PC-9 (cell line): ENCODE measurements at regions of chr18 and their contacts with region 1.

Region 1: GRCh38 chr18:903701-904100 is 970 bp upstream of the ADCYAP1 start:
- DNase-seq: peak in 1 of 2 experiments; percentile 48
- H3K4me3 ChIP-seq: no peak overlapping the region
- H3K27ac ChIP-seq: no peak overlapping the region
- H3K4me1 ChIP-seq: no peaks in the 10 kb centered on the region
- H3K27me3 ChIP-seq: peaks cover 5% of the 10 kb centered on the region; the same call in 1 of the 2 replicates
- CTCF ChIP-seq: no peak

Region 2: GRCh38 chr18:596288-596881 is 307.3 kb before region 1 on chr18:
- CTCF ChIA-PET with region 1: no interaction called
- POLR2A ChIA-PET with region 1: no interaction called
- intact Hi-C with region 1: no loop called
- DNase-seq: peak in 1 of 2 experiments; percentile 5
- H3K4me3 ChIP-seq: peak overlapping the region; percentile 54
- H3K27ac ChIP-seq: no peak overlapping the region
- H3K4me1 ChIP-seq: peaks cover 9% of the 10 kb centered on the region
- H3K27me3 ChIP-seq: peaks cover 57% of the 10 kb centered on the region
- CTCF ChIP-seq: no peak

Region 3: GRCh38 chr18:877238-877637 is 26.5 kb before region 1 on chr18:
- CTCF ChIA-PET with region 1: no interaction called
- POLR2A ChIA-PET with region 1: no interaction called
- intact Hi-C with region 1: no loop called
- DNase-seq: no peak
- H3K4me3 ChIP-seq: no peak overlapping the region
- H3K27ac ChIP-seq: no peak overlapping the region
- H3K4me1 ChIP-seq: no peaks in the 10 kb centered on the region
- H3K27me3 ChIP-seq: peaks cover 1% of the 10 kb centered on the region; the same call in 1 of the 2 replicates
- CTCF ChIP-seq: no peak

Region 4: DNA sequence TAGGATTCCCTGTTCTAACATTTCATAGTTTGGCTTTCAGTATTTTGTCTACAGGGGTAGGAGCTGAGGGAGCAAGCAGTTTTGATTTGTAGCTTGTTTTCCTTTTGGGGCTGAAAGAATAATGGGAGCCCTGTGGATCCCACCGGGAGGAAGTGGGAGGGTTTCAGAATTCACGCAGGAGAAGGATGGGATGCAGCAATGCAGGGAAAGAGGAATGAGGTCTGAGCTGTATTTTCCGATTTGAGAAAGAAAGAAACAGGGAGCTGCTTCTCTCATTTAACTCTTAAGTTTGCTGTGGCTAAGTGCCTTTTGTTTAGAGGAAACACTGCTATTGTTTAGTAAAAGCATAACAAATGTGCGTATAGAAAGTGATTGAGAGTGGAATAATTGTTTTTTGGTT is 142.0 kb after region 1 on chr18:
- CTCF ChIA-PET with region 1: no interaction called
- POLR2A ChIA-PET with region 1: no interaction called
- intact Hi-C with region 1: no loop called
- DNase-seq: no peak
- H3K4me3 ChIP-seq: no peak overlapping the region
- H3K27ac ChIP-seq: no peak overlapping the region
- H3K4me1 ChIP-seq: peaks cover 6% of the 10 kb centered on the region; the same call in 1 of the 2 replicates
- H3K27me3 ChIP-seq: no peaks in the 10 kb centered on the region
- CTCF ChIP-seq: no peak

Region 5: DNA sequence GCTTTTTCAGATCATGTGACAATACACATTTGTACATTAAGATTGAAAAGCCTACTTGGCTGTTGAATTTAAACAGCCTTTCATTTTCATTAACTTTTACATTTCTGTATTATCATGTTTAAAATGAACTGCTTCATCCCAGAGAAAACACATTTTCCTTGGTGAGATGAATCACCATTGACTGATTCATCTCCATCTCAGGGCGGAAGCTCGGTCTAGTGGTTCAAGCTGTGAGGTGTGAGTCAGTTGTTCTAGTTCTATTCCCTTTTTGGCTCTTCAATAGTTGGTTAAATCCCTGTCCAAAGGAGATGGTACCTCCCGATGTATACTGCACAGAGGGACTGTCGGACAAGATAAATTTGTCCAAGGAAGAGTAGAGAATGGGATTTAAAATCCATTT is 190.7 kb after region 1 on chr18:
- CTCF ChIA-PET with region 1: no interaction called
- POLR2A ChIA-PET with region 1: no interaction called
- intact Hi-C with region 1: loop called (anchors 5 kb)
- DNase-seq: no peak
- H3K4me3 ChIP-seq: no peak overlapping the region
- H3K27ac ChIP-seq: no peak overlapping the region
- H3K4me1 ChIP-seq: no peaks in the 10 kb centered on the region; the same call in 1 of the 2 replicates
- H3K27me3 ChIP-seq: no peaks in the 10 kb centered on the region
- CTCF ChIP-seq: no peak

Region 6: DNA sequence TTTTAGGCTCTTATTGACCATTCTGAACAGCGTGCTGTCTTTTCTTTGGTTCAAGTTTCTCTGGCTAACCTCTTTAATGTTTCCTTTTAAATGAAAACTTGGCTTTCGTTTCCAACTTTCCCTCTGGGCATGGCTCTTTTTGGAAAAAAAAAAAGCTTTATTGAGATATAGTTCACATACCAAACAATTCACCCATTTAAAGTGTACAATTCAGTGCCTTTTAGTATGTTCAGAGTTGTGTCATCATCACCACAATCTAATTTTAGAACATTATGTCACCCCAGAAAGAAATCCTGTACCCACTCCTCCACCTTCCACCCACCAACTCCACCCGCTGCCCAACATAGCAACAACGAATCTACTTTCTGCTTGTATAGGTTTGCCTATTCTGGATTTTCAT is 323.3 kb after region 1 on chr18:
- CTCF ChIA-PET with region 1: no interaction called
- POLR2A ChIA-PET with region 1: no interaction called
- intact Hi-C with region 1: no loop called
- DNase-seq: no peak
- H3K4me3 ChIP-seq: no peak overlapping the region
- H3K27ac ChIP-seq: no peak overlapping the region
- H3K4me1 ChIP-seq: no peaks in the 10 kb centered on the region
- H3K27me3 ChIP-seq: no peaks in the 10 kb centered on the region
- CTCF ChIP-seq: no peak